Activated T-helper 2 cell treated with anti-CD3 and anti-CD28 coated beads, Interferon-gamma antibody, Interleukin-2, Interleukin-4, amounts not matched to agents 10 μg/mL and 5 μg/mL and 100 μg/mL, durations not matched to agents 14 hours and 24 hours and 36 hours (primary cell): ENCODE measurements at regions of chr16 and their contacts with region 1.

Region 1: DNA sequence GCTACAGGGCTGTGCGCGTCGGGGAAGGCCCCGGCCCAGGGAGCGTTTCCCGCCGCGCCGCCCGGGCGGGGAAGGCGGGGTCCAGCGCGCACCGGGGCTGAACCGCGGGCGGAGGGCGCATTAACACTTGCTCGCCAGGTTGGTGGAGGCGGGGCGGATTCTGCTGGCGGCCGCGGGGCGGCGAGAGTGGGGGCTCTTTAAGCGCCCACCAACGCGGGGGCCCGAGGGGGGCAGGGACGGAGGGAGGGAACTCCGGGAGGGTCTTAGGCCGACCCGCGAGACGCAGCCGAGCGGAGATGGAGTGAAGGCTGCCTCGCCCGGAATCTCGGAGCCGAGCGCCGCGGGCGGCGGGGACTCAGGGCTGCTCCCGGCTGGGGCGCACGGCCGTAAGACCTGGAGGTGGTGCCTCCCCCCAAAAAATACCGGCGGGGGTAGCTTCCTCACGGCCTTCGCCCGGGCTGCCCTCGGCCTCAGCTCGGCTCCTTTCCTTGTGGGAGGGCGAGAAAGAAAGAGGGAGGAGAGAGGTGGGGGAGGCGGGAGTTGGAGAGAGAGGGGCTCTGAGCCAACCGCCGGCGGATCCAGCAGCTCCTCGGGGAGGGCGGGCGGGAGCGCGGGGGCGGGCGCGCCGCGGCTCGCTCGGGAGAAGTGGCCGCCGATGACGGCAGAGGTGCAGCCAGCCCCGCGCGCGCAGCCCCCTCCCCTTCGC is 415 bp upstream of the FOXF1 start:
- DNase-seq: no peak
- H3K4me3 Mint-ChIP-seq: no peak overlapping the region
- H3K27ac Mint-ChIP-seq: no peak overlapping the region
- H3K4me1 Mint-ChIP-seq: peaks cover 16% of the 10 kb centered on the region
- H3K27me3 Mint-ChIP-seq: peaks cover 61% of the 10 kb centered on the region

Region 2: DNA sequence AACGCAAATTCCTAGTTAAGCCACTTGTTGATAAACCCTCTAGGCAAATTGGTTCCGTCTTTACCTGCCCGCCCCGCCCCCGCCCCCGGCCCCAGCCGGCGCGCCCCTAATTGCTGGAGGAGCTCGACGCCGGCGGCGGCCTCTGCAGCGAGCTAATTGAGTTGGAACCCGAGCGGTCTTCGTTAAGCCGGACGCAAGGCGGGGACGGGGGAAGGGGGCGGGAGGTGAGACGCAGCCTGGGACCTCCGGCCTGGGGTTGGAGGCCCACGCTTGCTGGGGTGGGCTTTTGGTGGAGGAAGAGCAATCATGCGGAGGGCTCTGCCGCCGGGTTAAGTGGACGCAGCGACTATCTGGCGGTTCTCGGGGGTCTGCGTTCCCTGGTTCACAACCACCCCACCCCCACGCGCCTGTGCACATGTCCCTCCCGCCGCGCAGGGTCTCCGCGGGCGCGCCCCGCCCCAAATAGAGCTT is 12.3 kb before region 1 on chr16:
- intact Hi-C with region 1: loop called (anchors 2 kb)
- DNase-seq: no peak
- H3K4me3 Mint-ChIP-seq: no peak overlapping the region
- H3K27ac Mint-ChIP-seq: no peak overlapping the region
- H3K4me1 Mint-ChIP-seq: no peaks in the 10 kb centered on the region
- H3K27me3 Mint-ChIP-seq: peaks cover 76% of the 10 kb centered on the region

Region 3: GRCh38 chr16:86575754-86576557 is 66.0 kb after region 1 on chr16:
- intact Hi-C with region 1: no loop called
- DNase-seq: peak; percentile 50
- H3K4me3 Mint-ChIP-seq: peak overlapping the region; percentile 76
- H3K27ac Mint-ChIP-seq: no peak overlapping the region
- H3K4me1 Mint-ChIP-seq: peaks cover 10% of the 10 kb centered on the region
- H3K27me3 Mint-ChIP-seq: peaks cover 63% of the 10 kb centered on the region